ENCODE measurements at regions of chr4 and their contacts with region 1.

Region 1: DNA sequence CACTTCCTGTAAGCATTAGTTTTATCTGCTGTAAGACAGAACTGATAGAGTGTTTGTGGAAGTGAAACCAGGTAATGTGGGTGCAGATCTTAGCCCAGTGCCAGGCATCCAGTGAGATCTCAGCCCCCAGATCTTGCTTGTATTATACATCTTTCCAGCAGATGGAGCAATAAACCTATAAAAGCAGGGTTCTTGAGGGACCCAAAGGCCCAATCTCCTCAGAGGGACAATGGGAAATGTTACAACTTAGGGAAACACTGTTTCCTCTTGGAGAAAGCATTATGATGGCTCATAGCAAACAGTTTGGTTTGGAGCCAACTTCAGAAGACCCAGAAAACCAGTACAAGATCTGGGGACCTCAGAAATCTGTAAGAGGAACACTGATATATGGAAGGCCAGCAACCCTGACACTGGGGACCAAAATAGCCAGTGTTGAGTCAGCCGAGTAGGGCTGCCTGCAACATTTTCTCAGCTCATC is 206.3 kb downstream of the SLC7A11 start:
- DNase-seq: no peak
- H3K4me3 ChIP-seq: no peak overlapping the region
- H3K27ac ChIP-seq: no peak overlapping the region
- H3K4me1 ChIP-seq: peaks cover 12% of the 10 kb centered on the region
- H3K27me3 ChIP-seq: no peaks in the 10 kb centered on the region
- CTCF ChIP-seq: peak; percentile 72

Region 2: GRCh38 chr4:138182838-138183426 is 147.1 kb after region 1 on chr4:
- intact Hi-C with region 1: loop called (anchors 10 kb)
- DNase-seq: no peak
- H3K4me3 ChIP-seq: no peak overlapping the region
- H3K27ac ChIP-seq: no peak overlapping the region
- H3K4me1 ChIP-seq: peaks cover 23% of the 10 kb centered on the region
- H3K27me3 ChIP-seq: no peaks in the 10 kb centered on the region
- CTCF ChIP-seq: peak; percentile 78

Region 3: DNA sequence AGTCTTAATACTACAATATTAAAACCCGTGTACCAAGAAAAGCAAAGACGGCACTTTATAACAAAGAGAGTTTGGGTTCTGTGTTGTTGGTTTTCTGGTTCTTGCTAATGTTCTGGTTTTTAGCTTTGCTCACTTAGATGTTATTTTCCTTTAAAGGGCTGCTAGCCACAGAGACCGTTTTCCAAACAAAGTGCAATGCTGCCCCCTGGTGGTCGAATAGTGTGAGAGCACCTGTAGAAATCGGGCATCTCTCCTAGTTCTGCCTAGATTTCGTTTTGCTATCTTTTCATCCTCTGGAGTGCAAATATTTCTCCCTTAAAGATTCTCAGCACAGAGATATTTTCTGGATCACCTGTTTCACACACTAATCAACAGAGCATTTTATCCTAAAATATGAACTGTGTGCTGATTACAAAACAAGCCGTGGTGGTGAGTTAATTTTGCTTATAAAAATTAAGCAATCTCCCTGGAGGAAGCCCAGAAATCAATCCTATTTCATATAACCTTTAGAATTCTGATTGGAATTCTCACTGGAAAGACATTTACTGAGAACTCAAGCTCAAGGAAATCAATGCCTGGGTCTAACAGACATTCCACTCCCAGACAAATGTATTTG is 645.3 kb after region 1 on chr4:
- intact Hi-C with region 1: loop called (anchors 5 kb)
- DNase-seq: peak; percentile 76
- H3K4me3 ChIP-seq: no peak overlapping the region
- H3K27ac ChIP-seq: no peak overlapping the region
- H3K4me1 ChIP-seq: peaks cover 25% of the 10 kb centered on the region
- H3K27me3 ChIP-seq: no peaks in the 10 kb centered on the region
- CTCF ChIP-seq: peak; percentile 93

Measured in left ventricle myocardium inferior (tissue), 1 donor.